ENCODE measurements at regions of chr6 and their contacts with region 1.

Region 1: GRCh38 chr6:87756858-87757257 is 54.8 kb upstream of the AKIRIN2 start:
- DNase-seq: no peak
- H3K4me3 Mint-ChIP-seq: no peak overlapping the region
- H3K27ac Mint-ChIP-seq: peak overlapping the region; percentile 42
- H3K4me1 Mint-ChIP-seq: peaks cover 17% of the 10 kb centered on the region
- H3K27me3 Mint-ChIP-seq: peaks cover 8% of the 10 kb centered on the region

Region 2: DNA sequence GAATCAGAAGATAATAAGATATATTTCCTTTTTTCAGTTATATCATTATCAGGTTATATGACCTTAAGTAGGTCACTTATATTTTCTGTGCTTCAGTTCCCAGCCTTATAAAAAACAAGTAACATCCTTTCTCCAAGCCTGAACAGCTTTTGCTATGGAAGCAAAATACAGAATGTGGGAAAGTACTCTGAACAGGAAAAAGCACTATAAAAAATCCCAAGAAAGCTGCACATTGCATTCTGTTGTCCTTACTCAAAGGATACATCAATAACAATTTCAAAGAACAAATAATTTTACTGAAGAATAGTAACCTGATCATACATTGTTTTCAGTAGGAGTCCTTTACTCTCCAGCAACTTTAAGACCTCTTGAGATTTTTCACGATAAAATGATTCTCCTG is 227.6 kb before region 1 on chr6:
- intact Hi-C with region 1: no loop called
- DNase-seq: no peak
- H3K4me3 Mint-ChIP-seq: no peak overlapping the region
- H3K27ac Mint-ChIP-seq: no peak overlapping the region
- H3K4me1 Mint-ChIP-seq: peaks cover 11% of the 10 kb centered on the region
- H3K27me3 Mint-ChIP-seq: no peaks in the 10 kb centered on the region

Region 3: DNA sequence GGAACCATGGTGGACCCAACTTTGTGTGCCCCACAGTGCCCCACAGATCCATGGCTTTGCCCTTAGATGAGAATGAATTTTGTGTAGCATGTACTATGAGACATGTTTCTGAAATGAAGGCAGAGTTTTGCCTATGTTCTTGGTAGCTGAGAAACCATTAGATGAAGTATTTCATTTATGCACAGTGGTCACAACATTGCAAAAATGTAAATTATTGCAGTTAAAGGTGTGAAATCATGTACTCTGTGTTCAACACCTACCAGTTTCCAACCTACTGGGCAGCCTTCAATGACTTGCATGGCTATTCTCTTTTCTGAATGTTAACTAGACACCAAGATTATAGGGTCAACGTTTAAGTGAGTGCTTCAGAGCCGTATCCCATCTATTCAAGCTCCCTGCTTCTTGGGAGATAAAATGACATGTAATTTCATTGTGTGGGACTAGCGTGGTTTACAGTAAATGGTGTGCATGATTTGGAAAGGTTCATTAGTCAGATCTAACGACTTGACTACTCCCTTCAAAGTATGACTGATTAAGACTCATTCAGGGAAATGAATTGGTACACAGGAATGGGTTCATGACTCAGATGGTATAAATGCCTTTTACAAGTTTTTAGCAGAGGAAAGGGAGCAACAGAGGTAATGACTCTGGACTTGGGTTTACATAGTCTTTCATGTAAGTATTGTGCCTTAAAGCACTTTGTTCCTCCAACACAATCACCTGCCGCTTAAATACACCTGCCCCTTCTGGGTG is 51.3 kb after region 1 on chr6:
- intact Hi-C with region 1: loop called (anchors 2 kb)
- DNase-seq: no peak
- H3K4me3 Mint-ChIP-seq: no peak overlapping the region
- H3K27ac Mint-ChIP-seq: peak overlapping the region; percentile 36
- H3K4me1 Mint-ChIP-seq: peaks cover 8% of the 10 kb centered on the region
- H3K27me3 Mint-ChIP-seq: no peaks in the 10 kb centered on the region

Measured in activated T-helper 1 cell treated with anti-CD3 and anti-CD28 coated beads, Interleukin-12 subunit alpha, Interleukin-12 subunit beta, Interleukin-2, Interleukin-4 antibody, amounts not matched to agents 30 ng/mL and 10 ng/mL and 1 ng/mL, durations not matched to agents 14 hours and 24 hours and 36 hours (primary cell).